ENCODE measurements at regions of chr1 and their contacts with region 1.

Region 1: DNA sequence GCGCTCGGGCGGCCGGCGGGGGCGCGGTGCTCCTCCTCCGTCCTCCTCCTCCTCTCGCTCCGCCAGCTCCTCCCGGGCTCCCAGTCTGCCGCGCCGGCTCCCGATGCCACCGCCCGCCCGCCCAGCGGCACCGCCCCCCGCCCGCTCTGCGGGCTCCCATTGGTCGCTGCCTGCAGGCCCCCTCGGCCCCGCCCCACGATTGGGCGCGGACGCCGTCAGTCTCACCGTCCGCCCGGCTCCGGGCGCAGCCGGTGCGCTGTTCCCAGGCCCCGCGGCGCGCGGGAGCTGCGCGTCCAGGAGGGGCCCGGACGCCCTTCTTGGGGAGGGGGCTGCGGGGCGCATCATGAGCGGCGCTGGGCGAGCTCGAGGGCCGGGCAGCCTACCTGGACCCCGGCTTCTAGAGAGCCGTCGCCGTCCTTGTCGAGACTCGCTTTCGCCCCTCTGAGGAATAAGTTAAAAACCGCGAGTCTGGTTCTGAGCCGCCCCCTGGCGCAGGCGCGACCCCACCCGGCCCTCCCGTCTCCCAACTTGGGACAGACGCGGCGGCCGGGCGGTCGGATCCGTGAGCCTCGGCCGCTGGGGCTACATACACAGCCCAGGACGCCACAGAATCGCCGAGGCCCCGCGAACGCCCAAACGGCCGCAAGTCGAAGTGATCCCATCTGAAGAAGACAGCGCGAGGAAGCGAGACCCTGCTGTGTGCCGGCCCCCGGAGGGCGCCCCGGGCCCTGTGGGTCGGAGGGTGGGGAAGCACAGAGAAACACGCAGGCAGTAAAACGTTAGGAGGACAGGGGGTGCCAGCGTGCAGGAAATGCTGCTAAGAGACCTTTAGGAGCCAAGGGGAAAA is at the start of gene SIPA1L2:
- DNase-seq: peak; percentile 34
- H3K4me3 ChIP-seq: peak within 1 kb of the TSS; percentile 87 to 94 (median 89)
- H3K27ac ChIP-seq: peak within 1 kb of the TSS; percentile 84 to 95 (median 88)
- H3K4me1 ChIP-seq: peaks cover 7 to 44% (median 20%) of the 10 kb centered on the region in 3 donors
- H3K27me3 ChIP-seq: peaks cover 0 to 2% (median 0%) of the 10 kb centered on the region in 4 donors
- CTCF ChIP-seq: peak; percentile 25 to 66 (median 49)
- POLR2A ChIP-seq: peak in 2 of 4 donors; percentile 50 to 88
- total RNA-seq, gene SIPA1L2: 29.5 to 51.3 (median 46.0) TPM

Region 2: GRCh38 chr1:232950197-232951176 is 320.2 kb after region 1 on chr1 and contains the start of gene NTPCR:
- intact Hi-C with region 1: loop called (anchors 10 kb)
- DNase-seq: peak; percentile 52
- H3K4me3 ChIP-seq: peak within 1 kb of the TSS; percentile 62 to 91 (median 78)
- H3K27ac ChIP-seq: peak within 1 kb of the TSS; percentile 85 to 89 (median 88)
- H3K4me1 ChIP-seq: peaks cover 12 to 33% (median 18%) of the 10 kb centered on the region in 3 donors
- H3K27me3 ChIP-seq: peaks cover 0 to 3% (median 0%) of the 10 kb centered on the region in 4 donors
- CTCF ChIP-seq: peak in 3 of 6 experiments; percentile 20 to 23 (median 21)
- POLR2A ChIP-seq: peak in 2 of 4 donors; percentile 9 to 43
- total RNA-seq, gene NTPCR: 19.9 to 35.8 (median 23.4) TPM

Region 3: DNA sequence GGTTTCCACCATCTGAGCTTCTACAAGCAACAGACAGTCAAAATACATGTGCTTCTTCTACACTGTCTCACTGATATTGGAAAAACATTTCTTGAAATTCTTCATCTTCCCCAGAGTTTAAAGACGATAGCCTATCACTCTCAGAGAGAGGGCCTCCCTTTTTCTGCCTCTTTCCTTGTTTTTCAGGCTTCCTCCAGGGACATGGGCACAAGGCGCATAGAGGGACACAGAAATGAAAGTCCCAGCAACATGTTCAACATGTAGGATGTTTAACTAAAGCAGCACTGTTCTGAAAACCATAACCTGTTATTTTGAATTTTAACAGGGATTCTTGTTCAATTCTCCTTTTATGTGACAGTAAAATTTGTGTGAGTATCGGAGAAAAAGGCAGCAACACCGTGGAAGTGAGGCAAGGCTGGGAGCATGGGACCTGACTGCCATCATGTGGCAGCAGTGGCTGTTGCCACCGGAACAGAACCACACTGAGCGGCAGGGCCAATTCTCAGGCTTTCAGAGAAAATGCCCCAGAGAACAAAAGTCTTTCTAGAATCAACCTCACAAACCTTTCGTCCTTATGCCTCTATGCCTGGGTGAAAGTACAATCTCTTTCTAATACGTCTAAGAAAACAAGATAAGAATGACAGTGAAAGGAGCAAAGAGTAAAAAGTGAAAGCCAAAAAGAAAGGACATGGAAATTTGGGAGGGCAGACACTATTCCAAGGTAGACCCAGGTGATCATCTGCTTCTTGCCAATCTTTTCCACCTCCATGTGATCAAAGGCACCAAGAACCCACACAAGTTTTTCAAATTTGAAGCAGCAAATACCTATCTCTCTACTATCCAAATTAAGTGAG is 610.8 kb after region 1 on chr1:
- intact Hi-C with region 1: loop called (anchors 10 kb)
- DNase-seq: no peak
- H3K4me3 ChIP-seq: no peak overlapping the region
- H3K27ac ChIP-seq: no peak overlapping the region
- H3K4me1 ChIP-seq: peaks cover 0 to 16% (median 0%) of the 10 kb centered on the region in 3 donors
- H3K27me3 ChIP-seq: no peaks in the 10 kb centered on the region
- CTCF ChIP-seq: peak in 5 of 6 experiments; percentile 64 to 88 (median 71)
- POLR2A ChIP-seq: no peak